ENCODE measurements at regions of chr7 and their contacts with region 1.

Region 1: GRCh38 chr7:38274486-38274885 is 1.1 kb upstream of the TARP start:
- DNase-seq: no peak
- ATAC-seq: no peak
- H3K4me3 ChIP-seq: no peak overlapping the region
- H3K27ac ChIP-seq: no peak overlapping the region
- H3K4me1 ChIP-seq: no peaks in the 10 kb centered on the region
- H3K27me3 ChIP-seq: no peaks in the 10 kb centered on the region
- CTCF ChIP-seq: no peak

Region 2: GRCh38 chr7:38232502-38233366 is 41.8 kb before region 1 on chr7:
- CTCF ChIA-PET with region 1: no interaction called
- POLR2A ChIA-PET with region 1: no interaction called
- in situ Hi-C with region 1: no loop called
- intact Hi-C with region 1: no loop called
- DNase-seq: no peak
- ATAC-seq: no peak
- H3K4me3 ChIP-seq: no peak overlapping the region
- H3K27ac ChIP-seq: no peak overlapping the region
- H3K4me1 ChIP-seq: no peaks in the 10 kb centered on the region
- H3K27me3 ChIP-seq: no peaks in the 10 kb centered on the region
- CTCF ChIP-seq: no peak

Region 3: GRCh38 chr7:38257350-38257677 is 17.2 kb before region 1 on chr7:
- CTCF ChIA-PET with region 1: no interaction called
- POLR2A ChIA-PET with region 1: no interaction called
- in situ Hi-C with region 1: no loop called
- intact Hi-C with region 1: loop called (anchors 1 kb)
- DNase-seq: no peak
- ATAC-seq: no peak
- H3K4me3 ChIP-seq: no peak overlapping the region
- H3K27ac ChIP-seq: no peak overlapping the region
- H3K4me1 ChIP-seq: no peaks in the 10 kb centered on the region
- H3K27me3 ChIP-seq: peaks cover 16% of the 10 kb centered on the region
- CTCF ChIP-seq: no peak

Region 4: DNA sequence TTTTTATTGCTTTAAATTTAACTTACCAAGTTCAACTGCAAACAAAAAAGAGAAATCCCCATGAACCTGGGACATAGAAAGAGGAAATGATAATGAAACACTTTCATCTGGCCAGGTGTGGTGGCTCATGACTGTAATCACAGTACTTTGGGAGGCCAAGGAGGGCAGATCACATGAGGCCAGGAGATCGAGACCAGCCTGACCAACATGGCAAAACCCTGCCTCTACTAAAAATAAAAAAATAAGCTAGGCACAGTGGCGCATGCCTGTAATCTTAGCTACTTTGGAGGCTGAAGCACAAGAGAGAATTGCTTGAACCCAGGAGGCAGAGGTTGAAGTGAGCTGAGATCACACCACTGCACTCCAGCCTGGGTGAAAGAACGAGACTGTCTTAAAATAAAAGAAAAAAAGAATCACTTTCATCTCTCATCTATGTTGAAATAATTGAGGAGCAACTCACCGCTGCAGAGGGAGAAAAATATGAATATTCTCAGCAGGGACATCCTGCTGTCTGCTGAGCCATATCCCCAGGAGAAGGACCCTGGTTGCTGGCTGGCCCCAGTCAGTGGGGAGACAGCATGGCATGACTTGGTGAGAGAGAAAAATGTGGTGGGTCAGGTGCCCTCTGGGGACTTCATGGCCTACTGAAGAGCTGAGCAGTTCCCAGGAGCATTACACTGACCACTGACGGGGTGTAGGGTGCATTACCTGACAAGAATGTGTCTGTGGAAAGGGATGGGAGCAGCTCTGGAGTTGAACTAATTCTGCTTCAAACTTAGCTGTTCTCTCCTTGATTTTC is 21.8 kb after region 1 on chr7:
- CTCF ChIA-PET with region 1: no interaction called
- POLR2A ChIA-PET with region 1: no interaction called
- in situ Hi-C with region 1: no loop called
- intact Hi-C with region 1: no loop called
- DNase-seq: no peak
- ATAC-seq: no peak
- H3K4me3 ChIP-seq: no peak overlapping the region
- H3K27ac ChIP-seq: no peak overlapping the region
- H3K4me1 ChIP-seq: no peaks in the 10 kb centered on the region
- H3K27me3 ChIP-seq: peaks cover 2% of the 10 kb centered on the region; the same call in 1 of the 2 replicates
- CTCF ChIP-seq: no peak